Activated T-helper 1 cell treated with anti-CD3 and anti-CD28 coated beads, Interleukin-12 subunit alpha, Interleukin-12 subunit beta, Interleukin-2, Interleukin-4 antibody, amounts not matched to agents 30 ng/mL and 10 ng/mL and 1 ng/mL, durations not matched to agents 14 hours and 24 hours and 36 hours (primary cell): ENCODE measurements at regions of chr1 and their contacts with region 1.

Region 1: GRCh38 chr1:19485362-19486187 is at the start of gene CAPZB:
- DNase-seq: peak; percentile 90
- H3K4me3 Mint-ChIP-seq: peak within 1 kb of the TSS; percentile 94
- H3K27ac Mint-ChIP-seq: peak within 1 kb of the TSS; percentile 88
- H3K4me1 Mint-ChIP-seq: peaks cover 63% of the 10 kb centered on the region
- H3K27me3 Mint-ChIP-seq: no peaks in the 10 kb centered on the region
- total RNA-seq, gene CAPZB: 317 and 323 TPM in 2 replicates

Region 2: DNA sequence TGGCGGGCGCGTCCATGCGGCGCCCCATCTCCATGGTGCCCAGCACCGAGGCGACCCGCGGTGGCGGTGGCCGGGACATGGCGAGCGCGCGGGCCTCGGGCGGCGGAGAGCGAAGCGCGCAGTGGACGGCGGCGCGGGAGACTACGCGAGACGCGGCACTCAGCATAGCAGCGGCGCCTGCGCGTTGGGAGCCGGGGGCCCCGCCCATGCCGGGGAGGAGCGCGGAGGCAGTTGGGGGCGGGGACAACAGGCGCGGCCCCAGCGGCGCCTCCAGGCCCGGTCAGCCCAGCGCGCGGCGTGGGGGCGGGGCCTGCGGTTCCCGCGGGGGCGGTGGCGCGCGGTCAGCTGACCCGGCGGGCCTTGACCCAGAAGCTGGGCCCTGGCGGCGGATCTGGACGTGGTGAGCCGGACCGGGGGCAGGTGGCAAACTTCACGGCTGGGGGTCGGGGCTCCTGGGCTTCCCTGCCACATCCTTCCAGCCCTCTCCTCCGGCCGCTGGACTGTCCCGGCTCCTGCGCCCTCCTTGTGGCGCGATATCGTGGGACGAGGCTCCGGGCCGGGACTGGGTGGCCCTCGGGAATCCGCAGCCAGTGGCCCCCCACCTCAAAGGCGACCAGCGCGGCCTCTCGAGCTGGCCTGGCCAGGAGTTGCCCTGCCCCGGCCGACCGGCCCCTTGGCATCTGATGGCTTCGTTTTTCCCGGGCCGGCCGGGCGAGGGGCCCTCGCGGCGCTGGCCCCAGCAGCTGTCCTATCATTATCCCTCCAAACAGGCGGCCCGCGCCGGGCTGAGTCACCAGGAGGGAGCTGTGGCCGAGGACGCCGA is 173.4 kb before region 1 on chr1 and contains the starts of genes AKR7A2 and SLC66A1:
- intact Hi-C with region 1: loop called (anchors 1 kb)
- DNase-seq: peak; percentile 93
- H3K4me3 Mint-ChIP-seq: peak within 1 kb of the TSS; percentile 91
- H3K27ac Mint-ChIP-seq: peak within 1 kb of the TSS; percentile 87
- H3K4me1 Mint-ChIP-seq: peaks cover 30% of the 10 kb centered on the region
- H3K27me3 Mint-ChIP-seq: no peaks in the 10 kb centered on the region
- total RNA-seq, gene AKR7A2: 30.0 and 31.1 TPM in 2 replicates
- total RNA-seq, gene SLC66A1: 9.9 and 12.0 TPM in 2 replicates

Region 3: GRCh38 chr1:19448491-19449439 is 36.8 kb before region 1 on chr1:
- intact Hi-C with region 1: loop called (anchors 1 kb)
- DNase-seq: no peak
- H3K4me3 Mint-ChIP-seq: peak overlapping the region; percentile 24
- H3K27ac Mint-ChIP-seq: peak overlapping the region; percentile 91
- H3K4me1 Mint-ChIP-seq: peaks cover 84% of the 10 kb centered on the region
- H3K27me3 Mint-ChIP-seq: no peaks in the 10 kb centered on the region

Region 4: GRCh38 chr1:19582302-19582701 is 96.7 kb after region 1 on chr1:
- intact Hi-C with region 1: loop called (anchors 1 kb)
- DNase-seq: peak; percentile 54
- H3K4me3 Mint-ChIP-seq: no peak overlapping the region
- H3K27ac Mint-ChIP-seq: peak overlapping the region; percentile 25
- H3K4me1 Mint-ChIP-seq: peaks cover 7% of the 10 kb centered on the region
- H3K27me3 Mint-ChIP-seq: peaks cover 24% of the 10 kb centered on the region

Region 5: DNA sequence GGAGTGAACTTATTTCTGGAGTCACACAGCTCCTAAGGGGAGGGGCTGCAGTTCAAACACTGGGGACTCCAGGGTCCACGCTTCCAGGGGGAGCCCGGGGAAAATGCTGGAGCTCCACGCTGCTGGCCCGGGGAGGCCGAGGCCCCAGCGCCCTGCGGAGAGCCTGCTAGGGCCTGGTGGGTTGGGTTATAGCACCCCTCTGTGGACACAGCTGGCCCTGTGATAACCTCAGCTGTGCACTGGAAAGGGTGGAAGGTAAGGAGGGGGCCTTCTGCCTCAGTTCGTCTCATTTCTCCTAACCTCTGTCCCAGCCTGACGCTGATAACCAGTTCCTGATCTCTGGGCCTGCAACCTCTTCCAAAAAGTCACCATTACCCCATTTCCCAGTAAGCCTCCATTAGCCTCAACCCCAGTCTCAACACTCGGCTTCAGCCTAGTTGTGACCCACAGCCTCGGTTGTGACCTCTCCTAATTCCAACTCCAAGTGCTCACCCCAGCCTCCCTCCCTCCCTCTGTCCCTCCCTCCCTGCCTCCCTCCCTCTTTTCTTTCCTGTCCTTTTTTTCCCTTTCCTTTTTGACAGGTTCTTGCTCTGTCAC is 165.7 kb after region 1 on chr1:
- intact Hi-C with region 1: loop called (anchors 1 kb)
- DNase-seq: no peak
- H3K4me3 Mint-ChIP-seq: no peak overlapping the region
- H3K27ac Mint-ChIP-seq: no peak overlapping the region
- H3K4me1 Mint-ChIP-seq: peaks cover 27% of the 10 kb centered on the region
- H3K27me3 Mint-ChIP-seq: no peaks in the 10 kb centered on the region

Region 6: DNA sequence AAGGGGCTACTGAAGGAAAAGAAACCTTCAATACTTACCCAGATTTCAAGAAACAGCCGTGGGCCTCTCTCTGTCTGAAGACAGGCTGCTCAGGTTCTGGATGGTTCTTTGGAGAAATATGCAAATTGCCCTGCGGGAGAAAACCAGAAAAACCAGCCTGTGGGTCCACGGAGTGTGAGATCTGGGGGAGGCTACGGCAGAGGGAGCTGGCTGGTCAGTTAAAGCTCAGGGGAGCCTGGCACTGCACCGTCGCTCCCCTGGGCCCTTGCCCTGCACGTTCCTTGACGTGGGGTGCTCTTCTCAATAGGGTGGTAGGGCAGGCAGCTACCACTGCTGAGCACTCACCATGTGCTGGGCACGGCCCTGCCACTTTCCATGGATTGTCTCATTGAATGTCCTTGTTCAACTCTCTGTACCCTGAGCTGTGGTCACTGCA is 301.4 kb after region 1 on chr1:
- intact Hi-C with region 1: no loop called
- DNase-seq: no peak
- H3K4me3 Mint-ChIP-seq: no peak overlapping the region
- H3K27ac Mint-ChIP-seq: no peak overlapping the region
- H3K4me1 Mint-ChIP-seq: no peaks in the 10 kb centered on the region
- H3K27me3 Mint-ChIP-seq: no peaks in the 10 kb centered on the region